Endothelial cell of umbilical vein (primary cell): ENCODE measurements at regions of chr10 and their contacts with region 1.

Region 1: GRCh38 chr10:91251430-91252056 is 31.1 kb downstream of the PCGF5 start:
- DNase-seq: peak; percentile 61
- H3K4me3 ChIP-seq: no peak overlapping the region
- H3K27ac ChIP-seq: no peak overlapping the region
- H3K4me1 ChIP-seq: peaks cover 12% of the 10 kb centered on the region
- H3K27me3 ChIP-seq: no peaks in the 10 kb centered on the region
- CTCF ChIP-seq: peak; percentile 61 to 70
- POLR2A ChIP-seq: no peak

Region 2: GRCh38 chr10:90751107-90751997 is 500.2 kb before region 1 on chr10:
- CTCF ChIA-PET with region 1: interaction called, 3 read pairs
- POLR2A ChIA-PET with region 1: no interaction called
- dilution Hi-C with region 1: no loop called
- intact Hi-C with region 1: loop called (anchors 5 kb)
- DNase-seq: peak; percentile 58
- H3K4me3 ChIP-seq: no peak overlapping the region
- H3K27ac ChIP-seq: no peak overlapping the region
- H3K4me1 ChIP-seq: no peaks in the 10 kb centered on the region
- H3K27me3 ChIP-seq: peaks cover 4 to 11% of the 10 kb centered on the region in 2 experiments
- CTCF ChIP-seq: peak; percentile 63 to 66
- POLR2A ChIP-seq: no peak

Region 3: GRCh38 chr10:90885176-90885575 is 366.4 kb before region 1 on chr10:
- CTCF ChIA-PET with region 1: interaction called, 73 read pairs
- POLR2A ChIA-PET with region 1: no interaction called
- dilution Hi-C with region 1: loop called (anchors 25 kb)
- intact Hi-C with region 1: loop called (anchors 1 kb)
- DNase-seq: no peak
- H3K4me3 ChIP-seq: no peak overlapping the region
- H3K27ac ChIP-seq: no peak overlapping the region
- H3K4me1 ChIP-seq: no peaks in the 10 kb centered on the region
- H3K27me3 ChIP-seq: no peaks in the 10 kb centered on the region
- CTCF ChIP-seq: no peak
- POLR2A ChIP-seq: no peak

Region 4: GRCh38 chr10:90920986-90921666 is 330.4 kb before region 1 on chr10 and contains the start of gene ANKRD1:
- CTCF ChIA-PET with region 1: interaction called, 23 read pairs
- POLR2A ChIA-PET with region 1: interaction called, 5 read pairs
- dilution Hi-C with region 1: no loop called
- intact Hi-C with region 1: no loop called
- DNase-seq: peak; percentile 97
- H3K4me3 ChIP-seq: peak within 1 kb of the TSS; percentile 52 to 98 (median 56)
- H3K27ac ChIP-seq: peak within 1 kb of the TSS; percentile 82
- H3K4me1 ChIP-seq: peaks cover 28% of the 10 kb centered on the region
- H3K27me3 ChIP-seq: no peaks in the 10 kb centered on the region
- CTCF ChIP-seq: no peak
- POLR2A ChIP-seq: peak; percentile 94
- total RNA-seq, gene ANKRD1: 591 and 664 TPM in 2 replicates

Region 5: GRCh38 chr10:91006001-91006751 is 245.4 kb before region 1 on chr10:
- CTCF ChIA-PET with region 1: interaction called, 134 read pairs
- POLR2A ChIA-PET with region 1: no interaction called
- dilution Hi-C with region 1: no loop called
- intact Hi-C with region 1: loop called (anchors 1 kb)
- DNase-seq: peak; percentile 90
- H3K4me3 ChIP-seq: no peak overlapping the region
- H3K27ac ChIP-seq: no peak overlapping the region
- H3K4me1 ChIP-seq: no peaks in the 10 kb centered on the region
- H3K27me3 ChIP-seq: no peaks in the 10 kb centered on the region
- CTCF ChIP-seq: peak; percentile 83 to 87
- POLR2A ChIP-seq: no peak

Region 6: GRCh38 chr10:91088300-91089140 is 163.0 kb before region 1 on chr10:
- CTCF ChIA-PET with region 1: interaction called, 35 read pairs
- POLR2A ChIA-PET with region 1: no interaction called
- dilution Hi-C with region 1: no loop called
- intact Hi-C with region 1: no loop called
- DNase-seq: peak; percentile 8
- H3K4me3 ChIP-seq: no peak overlapping the region
- H3K27ac ChIP-seq: no peak overlapping the region
- H3K4me1 ChIP-seq: no peaks in the 10 kb centered on the region
- H3K27me3 ChIP-seq: no peaks in the 10 kb centered on the region
- CTCF ChIP-seq: no peak
- POLR2A ChIP-seq: no peak